Caco-2 (cell line): ENCODE measurements at regions of chr16 and their contacts with region 1.

Region 1: DNA sequence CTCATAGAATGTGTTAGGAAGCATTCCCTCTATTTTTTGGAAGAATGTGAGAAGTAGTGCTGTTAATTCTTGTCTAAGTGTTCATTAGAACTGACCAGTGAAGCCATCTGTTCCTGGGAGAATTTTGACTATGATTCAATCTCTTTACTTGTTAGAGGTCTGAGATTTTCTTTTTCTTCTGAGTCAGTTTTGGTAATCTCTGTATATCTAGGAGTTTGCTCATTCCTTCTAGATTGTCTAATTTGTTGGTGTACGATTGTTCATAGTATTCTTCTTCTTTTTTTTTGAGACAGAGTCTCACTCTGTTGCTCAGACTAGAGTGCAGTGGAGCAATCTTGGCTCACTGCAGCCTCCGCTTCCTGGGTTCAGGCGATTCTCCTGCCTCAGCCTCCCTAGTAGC is 20.4 kb downstream of the NFATC3 start:
- DNase-seq: no peak
- H3K4me3 ChIP-seq: no peak overlapping the region
- H3K4me3 Mint-ChIP-seq: no peak overlapping the region
- H3K27ac Mint-ChIP-seq: no peak overlapping the region
- H3K4me1 ChIP-seq: peaks cover 7% of the 10 kb centered on the region; the same call in 1 of the 2 replicates
- H3K4me1 Mint-ChIP-seq: peaks cover 6% of the 10 kb centered on the region
- H3K27me3 ChIP-seq: no peaks in the 10 kb centered on the region
- H3K27me3 Mint-ChIP-seq: no peaks in the 10 kb centered on the region
- CTCF ChIP-seq: no peak

Region 2: DNA sequence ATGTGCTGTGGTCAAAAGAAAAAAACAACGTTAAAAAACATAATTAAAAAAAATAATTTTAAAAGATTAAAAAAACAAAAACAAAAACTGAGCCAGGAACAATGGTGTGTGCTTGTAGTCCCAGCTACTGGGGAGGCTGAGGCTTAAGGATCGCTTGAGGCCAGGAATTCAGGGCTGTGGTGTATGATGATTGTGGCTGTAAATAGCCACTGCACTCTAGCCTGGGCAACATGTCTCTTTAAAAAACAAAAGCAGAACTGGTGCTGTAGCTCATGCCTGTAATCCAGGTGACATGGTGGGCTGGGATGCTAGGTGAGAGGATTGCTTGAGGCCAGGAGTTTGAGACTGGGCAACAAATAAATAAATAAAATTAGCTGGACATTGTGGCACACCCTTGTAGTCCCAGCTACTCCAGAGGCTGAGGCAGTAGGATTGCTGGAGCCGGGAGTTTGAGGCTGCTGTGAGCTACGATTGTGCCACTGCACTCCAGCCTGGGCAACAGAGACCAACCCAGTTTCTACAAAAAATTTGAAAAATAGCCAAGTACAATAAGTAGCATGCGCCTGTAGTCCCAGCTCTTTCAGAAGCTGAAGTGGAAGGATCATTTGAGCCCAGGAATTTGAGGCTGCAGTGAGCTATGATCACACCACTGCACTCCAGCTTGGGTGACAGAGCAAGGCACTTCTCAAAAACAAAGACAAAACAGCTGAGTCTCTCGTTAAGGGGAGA is 23.1 kb after region 1 on chr16:
- CTCF ChIA-PET with region 1: no interaction called
- POLR2A ChIA-PET with region 1: interaction called, 19 read pairs
- intact Hi-C with region 1: no loop called
- DNase-seq: no peak
- H3K4me3 ChIP-seq: no peak overlapping the region
- H3K4me3 Mint-ChIP-seq: no peak overlapping the region
- H3K27ac Mint-ChIP-seq: no peak overlapping the region
- H3K4me1 ChIP-seq: no peaks in the 10 kb centered on the region
- H3K4me1 Mint-ChIP-seq: no peaks in the 10 kb centered on the region
- H3K27me3 ChIP-seq: no peaks in the 10 kb centered on the region
- H3K27me3 Mint-ChIP-seq: no peaks in the 10 kb centered on the region
- CTCF ChIP-seq: no peak